ENCODE measurements at regions of chr9 and their contacts with region 1.

Region 1: DNA sequence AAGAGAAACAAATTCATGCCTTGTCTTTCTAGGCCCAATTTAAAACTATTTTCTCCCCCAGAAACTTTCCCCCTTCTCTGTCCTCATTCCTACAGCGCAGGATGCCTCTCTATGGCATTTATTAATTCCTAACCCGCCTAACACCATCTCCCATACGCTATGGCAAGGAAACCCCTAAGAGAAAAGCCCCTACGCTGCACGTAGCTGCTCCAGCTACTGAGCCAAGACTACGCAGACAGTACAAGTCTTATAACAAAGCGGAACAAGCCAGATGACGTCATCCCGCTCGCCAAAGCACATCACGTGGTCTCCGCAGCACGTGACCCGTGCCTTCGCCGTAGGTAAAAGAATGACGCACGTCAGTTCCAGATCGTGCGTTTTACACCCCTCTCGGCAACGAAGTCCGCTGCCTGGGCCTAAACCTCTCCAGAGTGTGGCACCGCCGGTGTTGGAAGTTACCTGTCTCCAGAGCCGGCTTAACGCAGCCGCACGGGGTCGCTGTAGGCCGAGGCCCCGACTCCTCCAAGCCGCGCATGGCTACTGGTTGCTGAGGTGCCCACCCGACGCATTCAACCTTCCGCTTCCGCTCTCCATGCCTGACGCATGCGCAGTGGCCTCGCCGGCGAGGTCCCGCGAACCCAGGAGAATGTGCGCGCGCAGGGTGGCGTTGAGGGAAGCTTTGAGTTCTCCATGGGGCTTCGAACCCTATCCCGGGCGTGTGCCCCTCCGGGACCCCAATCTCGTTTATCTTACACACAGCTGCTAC is at the start of gene TRMO:
- DNase-seq: peak; percentile 96
- H3K4me3 Mint-ChIP-seq: peak within 1 kb of the TSS; percentile 97
- H3K27ac Mint-ChIP-seq: peak within 1 kb of the TSS; percentile 100
- H3K4me1 Mint-ChIP-seq: peaks cover 42% of the 10 kb centered on the region
- H3K27me3 Mint-ChIP-seq: peaks cover 2% of the 10 kb centered on the region
- total RNA-seq, gene TRMO: 13.4 and 15.3 TPM in 2 replicates

Region 2: GRCh38 chr9:97954550-97954989 is 32.4 kb after region 1 on chr9:
- intact Hi-C with region 1: loop called (anchors 1 kb)
- DNase-seq: peak; percentile 38
- H3K4me3 Mint-ChIP-seq: no peak overlapping the region
- H3K27ac Mint-ChIP-seq: no peak overlapping the region
- H3K4me1 Mint-ChIP-seq: peaks cover 10% of the 10 kb centered on the region
- H3K27me3 Mint-ChIP-seq: peaks cover 9% of the 10 kb centered on the region

Region 3: GRCh38 chr9:98034593-98035546 is 112.7 kb after region 1 on chr9:
- intact Hi-C with region 1: loop called (anchors 1 kb)
- DNase-seq: peak; percentile 78
- H3K4me3 Mint-ChIP-seq: no peak overlapping the region
- H3K27ac Mint-ChIP-seq: peak overlapping the region; percentile 67
- H3K4me1 Mint-ChIP-seq: peaks cover 7% of the 10 kb centered on the region
- H3K27me3 Mint-ChIP-seq: no peaks in the 10 kb centered on the region

Region 4: DNA sequence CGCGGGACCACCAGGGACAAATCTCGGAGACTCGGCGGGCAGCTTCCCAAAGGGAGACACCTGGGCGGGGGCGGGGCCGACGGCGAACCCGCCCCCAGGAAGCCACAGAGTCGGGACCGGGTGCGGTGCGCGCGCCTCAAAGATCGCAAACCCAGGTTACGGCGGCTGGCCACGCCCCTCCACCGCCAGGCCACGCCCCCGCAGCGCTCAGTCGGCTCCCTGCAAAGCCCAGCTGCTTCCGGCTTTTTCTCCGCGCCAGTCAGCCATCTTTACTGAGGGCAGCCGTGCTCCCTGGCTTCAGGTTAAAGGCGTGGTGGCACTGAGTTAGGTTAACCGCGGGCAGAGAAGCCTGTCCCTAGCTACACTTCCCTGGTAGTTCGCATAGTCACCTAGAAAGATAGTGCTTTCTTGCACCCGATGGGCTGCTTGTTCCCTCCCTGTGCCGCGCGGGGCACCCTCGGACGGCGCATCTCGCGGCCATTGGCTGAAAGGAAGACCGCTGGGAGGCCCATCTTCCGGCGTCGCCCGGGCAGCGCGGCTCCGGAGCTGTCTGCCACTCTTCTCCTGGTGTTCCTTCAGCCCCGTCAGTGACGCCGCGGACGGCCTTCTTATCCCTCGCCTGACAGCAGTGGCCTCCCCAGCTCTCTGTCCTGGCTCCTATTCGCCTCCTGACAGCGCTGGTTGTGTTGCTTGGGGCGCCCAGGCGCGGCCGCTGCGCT is 333.6 kb after region 1 on chr9 and contains the start of gene TBC1D2:
- intact Hi-C with region 1: loop called (anchors 1 kb)
- DNase-seq: peak; percentile 96
- H3K4me3 Mint-ChIP-seq: peak within 1 kb of the TSS; percentile 97
- H3K27ac Mint-ChIP-seq: peak within 1 kb of the TSS; percentile 94
- H3K4me1 Mint-ChIP-seq: peaks cover 23% of the 10 kb centered on the region
- H3K27me3 Mint-ChIP-seq: peaks cover 12% of the 10 kb centered on the region
- total RNA-seq, gene TBC1D2: 1.3 and 1.5 TPM in 2 replicates

Measured in activated T-helper 2 cell treated with anti-CD3 and anti-CD28 coated beads, Interferon-gamma antibody, Interleukin-2, Interleukin-4, amounts not matched to agents 10 μg/mL and 5 μg/mL and 100 μg/mL, durations not matched to agents 14 hours and 24 hours and 36 hours (primary cell).